Activated CD4-positive, alpha-beta memory T cell treated with anti-CD3 and anti-CD28 coated beads for 36 hours (primary cell): ENCODE measurements at regions of chr9 and their contacts with region 1.

Region 1: GRCh38 chr9:68584189-68585033 is 43.7 kb upstream of the TMEM252 start:
- DNase-seq: peak; percentile 87
- H3K4me3 Mint-ChIP-seq: no peak overlapping the region
- H3K27ac Mint-ChIP-seq: no peak overlapping the region
- H3K4me1 Mint-ChIP-seq: no peaks in the 10 kb centered on the region
- H3K27me3 Mint-ChIP-seq: peaks cover 6% of the 10 kb centered on the region

Region 2: GRCh38 chr9:68614121-68614520 is 29.7 kb after region 1 on chr9:
- CTCF ChIA-PET with region 1: no interaction called
- POLR2A ChIA-PET with region 1: no interaction called
- intact Hi-C with region 1: no loop called
- DNase-seq: no peak
- H3K4me3 Mint-ChIP-seq: no peak overlapping the region
- H3K27ac Mint-ChIP-seq: no peak overlapping the region
- H3K4me1 Mint-ChIP-seq: no peaks in the 10 kb centered on the region
- H3K27me3 Mint-ChIP-seq: peaks cover 2% of the 10 kb centered on the region

Region 3: DNA sequence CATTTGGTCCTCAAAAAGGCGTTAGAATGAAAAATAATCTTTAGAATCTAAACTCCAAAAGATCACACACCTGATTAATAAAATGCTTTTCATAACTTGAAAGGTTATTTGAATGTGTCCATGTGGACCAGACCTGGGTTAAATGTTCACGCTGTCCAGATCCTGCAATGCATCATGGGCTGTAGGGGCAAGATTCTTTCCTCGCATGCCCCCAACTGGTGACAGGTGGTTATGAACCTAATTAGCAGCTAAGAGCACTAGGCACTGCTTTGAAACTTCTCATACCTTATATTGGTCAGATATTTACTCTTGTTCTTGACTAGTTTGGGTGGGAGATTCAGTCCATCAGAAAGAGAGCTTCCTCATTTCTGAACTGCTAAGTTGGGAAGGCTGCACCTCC is 101.4 kb after region 1 on chr9:
- CTCF ChIA-PET with region 1: interaction called, 45 read pairs
- POLR2A ChIA-PET with region 1: no interaction called
- intact Hi-C with region 1: loop called (anchors 1 kb)
- DNase-seq: peak; percentile 42
- H3K4me3 Mint-ChIP-seq: no peak overlapping the region
- H3K27ac Mint-ChIP-seq: no peak overlapping the region
- H3K4me1 Mint-ChIP-seq: peaks cover 2% of the 10 kb centered on the region
- H3K27me3 Mint-ChIP-seq: peaks cover 26% of the 10 kb centered on the region

Region 4: DNA sequence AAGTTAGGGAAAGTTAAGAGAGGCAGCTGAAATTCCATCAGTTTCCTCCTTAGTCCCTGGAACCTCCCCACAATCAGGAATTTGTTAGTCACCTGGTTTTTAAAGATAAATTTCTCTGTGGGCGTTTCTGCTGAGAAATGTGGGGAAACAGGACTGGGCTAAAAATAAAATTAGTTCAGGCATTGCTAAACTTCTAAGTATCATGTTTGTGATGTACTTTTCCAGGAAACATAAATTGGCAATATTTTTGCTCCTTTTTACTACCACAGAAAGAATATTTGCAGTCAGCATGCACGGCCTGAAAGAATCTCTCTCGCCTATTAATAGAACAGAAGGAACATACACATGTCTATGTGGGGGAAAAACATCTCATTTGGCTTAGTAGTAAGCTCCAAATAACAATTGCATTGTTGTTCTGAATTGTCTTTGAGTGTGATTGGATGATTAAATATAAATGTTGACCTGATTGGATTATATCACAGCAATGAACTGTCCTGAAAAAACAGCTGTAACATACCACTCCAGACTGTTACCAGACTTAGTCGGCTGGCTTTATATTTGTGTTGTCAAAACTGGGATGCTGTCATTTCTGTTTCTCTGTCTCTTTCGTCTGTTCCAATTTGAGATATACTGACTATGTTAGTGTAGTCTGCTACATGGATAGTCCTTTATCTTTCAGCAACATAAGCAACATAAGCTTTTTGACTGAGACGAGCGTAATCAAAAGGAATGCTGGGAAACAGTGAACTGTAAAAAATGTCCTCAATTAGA is 602.6 kb after region 1 on chr9:
- CTCF ChIA-PET with region 1: no interaction called
- POLR2A ChIA-PET with region 1: no interaction called
- intact Hi-C with region 1: loop called (anchors 5 kb)
- DNase-seq: no peak
- H3K4me3 Mint-ChIP-seq: no peak overlapping the region
- H3K27ac Mint-ChIP-seq: no peak overlapping the region
- H3K4me1 Mint-ChIP-seq: peaks cover 27% of the 10 kb centered on the region
- H3K27me3 Mint-ChIP-seq: no peaks in the 10 kb centered on the region